HCT116 (cell line): ENCODE measurements at regions of chr7 and their contacts with region 1.

Region 1: DNA sequence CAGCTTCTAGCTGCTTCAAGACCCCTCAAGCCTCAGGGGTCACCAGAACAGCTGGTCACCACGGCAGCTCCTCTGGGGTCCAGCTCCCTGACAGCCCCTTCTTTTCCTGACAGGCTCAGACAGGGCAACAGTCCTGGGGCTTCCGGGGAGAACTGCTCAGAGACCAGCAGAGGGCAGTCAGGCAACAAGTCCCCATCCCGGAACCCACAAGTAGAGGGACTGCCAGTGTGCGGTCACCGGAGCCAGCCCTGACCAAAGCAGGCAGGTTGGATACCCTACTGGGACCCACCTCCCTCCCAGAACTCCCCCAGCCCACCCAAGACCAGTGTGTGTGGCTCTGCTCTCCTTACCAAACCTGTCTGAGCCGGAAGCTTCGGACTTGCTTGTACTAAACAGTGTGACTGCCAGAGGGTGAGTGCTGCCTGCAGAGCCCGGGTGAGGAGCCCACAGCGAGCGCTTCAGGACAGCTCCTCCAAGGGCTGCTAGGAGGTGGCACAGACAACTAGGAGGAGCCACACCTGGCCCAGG is 40.3 kb downstream of the YKT6 start:
- DNase-seq: peak; percentile 66
- ATAC-seq: peak; percentile 98
- H3K4me3 ChIP-seq: no peak overlapping the region
- H3K27ac ChIP-seq: no peak overlapping the region
- H3K4me1 ChIP-seq: peaks cover 0 to 5% of the 10 kb centered on the region in 2 experiments; a peak in 1 of 4 replicates
- H3K27me3 ChIP-seq: no peaks in the 10 kb centered on the region
- CTCF ChIP-seq: peak; percentile 87 to 91 (median 89)
- POLR2A ChIP-seq: no peak
- RAD21 ChIP-seq: peak; percentile 93

Region 2: GRCh38 chr7:43679210-43680068 is 561.6 kb before region 1 on chr7:
- CTCF ChIA-PET with region 1: no interaction called
- POLR2A ChIA-PET with region 1: no interaction called
- RAD21 ChIA-PET with region 1: no interaction called
- intact Hi-C with region 1: no loop called
- DNase-seq: no peak
- ATAC-seq: no peak
- H3K4me3 ChIP-seq: no peak overlapping the region
- H3K27ac ChIP-seq: no peak overlapping the region
- H3K4me1 ChIP-seq: peaks cover 3 to 13% of the 10 kb centered on the region in 2 experiments; a peak in 3 of 4 replicates
- H3K27me3 ChIP-seq: no peaks in the 10 kb centered on the region
- CTCF ChIP-seq: no peak
- POLR2A ChIP-seq: no peak
- RAD21 ChIP-seq: no peak

Region 3: GRCh38 chr7:44177570-44178131 is 63.4 kb before region 1 on chr7:
- CTCF ChIA-PET with region 1: no interaction called
- POLR2A ChIA-PET with region 1: no interaction called
- RAD21 ChIA-PET with region 1: no interaction called
- intact Hi-C with region 1: no loop called
- DNase-seq: no peak
- ATAC-seq: peak; percentile 57
- H3K4me3 ChIP-seq: no peak overlapping the region
- H3K27ac ChIP-seq: no peak overlapping the region
- H3K4me1 ChIP-seq: peaks cover 10 to 11% of the 10 kb centered on the region in 2 experiments
- H3K27me3 ChIP-seq: 0 out of 2 replicates have a peak, but pooled peaks cover 5% of the 10 kb centered on the region
- CTCF ChIP-seq: no peak
- POLR2A ChIP-seq: no peak
- RAD21 ChIP-seq: no peak

Region 4: DNA sequence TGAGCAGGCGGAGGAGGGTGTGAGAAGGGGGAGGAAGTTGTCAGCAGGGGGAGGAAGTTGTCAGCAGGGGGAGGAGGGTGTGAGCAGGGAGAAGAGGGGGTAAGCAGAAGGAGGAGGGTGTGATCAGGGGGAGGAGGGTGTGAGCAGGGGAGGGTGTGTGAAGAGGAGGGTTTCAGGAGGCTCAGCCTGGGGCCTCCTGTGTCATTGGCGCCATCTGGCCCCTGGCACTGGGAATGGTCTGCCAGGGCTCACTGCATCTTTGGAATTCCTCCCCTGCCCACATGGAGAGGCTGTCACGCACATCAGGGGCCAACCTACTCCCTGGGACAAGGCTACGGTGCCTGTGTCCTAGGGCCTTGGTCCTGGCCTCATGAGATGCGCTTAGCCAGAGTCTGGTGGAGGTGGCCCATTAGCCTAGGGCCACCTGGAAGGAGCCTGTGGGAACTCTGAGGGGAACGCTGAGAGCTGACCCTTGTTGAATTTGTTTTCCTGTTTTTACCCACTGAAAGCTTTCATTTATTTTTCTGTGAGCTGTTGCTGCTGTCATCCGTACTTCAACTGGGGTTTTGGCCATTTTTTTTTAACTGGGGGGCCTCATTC is 66.4 kb after region 1 on chr7:
- CTCF ChIA-PET with region 1: interaction called, 6 read pairs
- POLR2A ChIA-PET with region 1: no interaction called
- RAD21 ChIA-PET with region 1: no interaction called
- intact Hi-C with region 1: loop called (anchors 2 kb)
- DNase-seq: peak; percentile 43
- ATAC-seq: peak; percentile 93
- H3K4me3 ChIP-seq: peak overlapping the region; percentile 14 to 15
- H3K27ac ChIP-seq: peak overlapping the region; percentile 31
- H3K4me1 ChIP-seq: peaks cover 14 to 22% of the 10 kb centered on the region in 2 experiments; a peak in 3 of 4 replicates
- H3K27me3 ChIP-seq: no peaks in the 10 kb centered on the region
- CTCF ChIP-seq: peak; percentile 37 to 70 (median 51)
- POLR2A ChIP-seq: no peak
- RAD21 ChIP-seq: peak; percentile 83